ENCODE measurements at regions of chr1 and their contacts with region 1.

Region 1: DNA sequence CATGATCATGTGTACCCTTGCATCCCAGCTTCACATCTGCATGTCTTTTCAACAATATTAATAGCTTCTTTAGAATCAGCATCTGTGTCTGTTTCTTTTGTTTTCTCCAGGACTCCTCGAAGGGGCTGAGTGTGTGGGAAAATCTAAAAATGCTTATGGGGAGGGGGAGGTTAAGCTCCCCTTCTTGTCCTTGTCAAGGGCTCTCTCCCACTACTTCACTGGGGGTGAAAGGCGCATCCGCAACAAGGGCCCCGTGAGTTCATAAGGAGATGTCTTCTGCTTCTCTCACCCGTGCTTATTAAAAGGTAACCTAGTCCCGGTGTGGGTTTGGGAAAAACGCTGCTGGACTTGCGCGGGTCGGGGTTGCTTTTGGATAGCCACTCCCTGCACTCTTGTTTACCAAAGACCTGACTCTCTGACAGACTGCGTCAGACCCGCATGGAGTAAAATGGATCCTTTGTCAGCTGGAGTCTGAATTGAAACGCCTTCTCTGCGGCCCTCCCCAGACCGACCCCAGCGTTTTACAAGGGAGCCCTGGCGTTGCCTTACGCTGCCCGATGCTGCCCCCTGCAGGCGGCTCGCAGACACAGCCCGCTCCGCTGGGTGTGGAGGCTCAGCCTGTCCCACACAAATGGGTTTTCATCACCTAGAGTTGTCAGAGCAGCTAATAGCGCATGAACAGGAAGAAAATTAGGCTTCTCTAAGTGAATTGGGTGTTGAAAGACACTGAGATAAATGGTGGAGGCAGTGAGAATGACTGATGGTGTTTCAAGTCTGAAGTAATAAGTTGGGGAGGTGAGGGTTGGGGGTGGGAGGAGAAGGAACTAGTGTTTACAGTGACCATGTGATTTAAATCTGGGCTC is 53.8 kb downstream of the IER5 start:
- DNase-seq: peak; percentile 84
- CTCF ChIP-seq: peak; percentile 99

Region 2: GRCh38 chr1:180662709-180663108 is 479.6 kb before region 1 on chr1:
- in situ Hi-C with region 1: no loop called
- DNase-seq: no peak
- CTCF ChIP-seq: no peak

Region 3: DNA sequence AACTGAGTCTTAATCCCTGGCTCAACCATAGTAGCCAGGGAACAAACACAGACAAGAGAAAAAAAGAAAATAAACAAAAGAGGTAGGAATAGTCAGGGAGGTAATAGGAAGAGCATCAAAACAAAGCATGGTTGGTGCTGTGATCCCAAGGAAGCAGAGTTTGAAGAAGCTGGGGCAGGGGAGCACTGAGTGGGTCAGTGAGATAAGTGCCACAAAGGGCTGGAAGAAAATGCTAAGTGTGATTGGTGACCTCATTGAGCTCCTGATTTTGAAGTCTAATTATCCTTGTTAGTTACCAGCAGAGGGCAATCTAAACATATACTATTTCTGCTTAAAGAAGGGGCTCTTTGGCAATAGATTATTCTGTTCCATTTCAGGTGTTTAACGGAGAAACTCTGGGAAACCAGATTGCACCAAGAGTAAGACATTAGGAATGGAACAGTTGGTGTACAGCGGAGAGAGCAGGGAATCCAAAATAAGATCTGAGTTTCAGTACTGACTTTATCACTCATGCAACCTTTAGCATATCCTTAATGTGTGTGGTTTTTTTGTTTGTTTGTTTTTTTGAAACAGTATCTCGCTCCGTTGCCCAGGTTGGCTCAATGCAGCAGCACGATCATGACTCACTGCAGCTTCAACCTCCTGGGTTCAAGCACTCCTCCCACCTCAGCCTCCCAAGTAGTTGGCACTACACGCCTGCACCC is 260.4 kb before region 1 on chr1:
- in situ Hi-C with region 1: loop called (anchors 5 kb)
- DNase-seq: peak; percentile 67
- CTCF ChIP-seq: peak; percentile 43

Region 4: GRCh38 chr1:181033799-181034451 is 108.4 kb before region 1 on chr1 and contains the start of gene MR1:
- in situ Hi-C with region 1: loop called (anchors 10 kb)
- DNase-seq: peak; percentile 80
- CTCF ChIP-seq: no peak

Region 5: GRCh38 chr1:181347495-181348390 is 205.4 kb after region 1 on chr1:
- in situ Hi-C with region 1: no loop called
- DNase-seq: no peak
- CTCF ChIP-seq: no peak